Caco-2 (cell line): ENCODE measurements at regions of chr12 and their contacts with region 1.

Region 1: DNA sequence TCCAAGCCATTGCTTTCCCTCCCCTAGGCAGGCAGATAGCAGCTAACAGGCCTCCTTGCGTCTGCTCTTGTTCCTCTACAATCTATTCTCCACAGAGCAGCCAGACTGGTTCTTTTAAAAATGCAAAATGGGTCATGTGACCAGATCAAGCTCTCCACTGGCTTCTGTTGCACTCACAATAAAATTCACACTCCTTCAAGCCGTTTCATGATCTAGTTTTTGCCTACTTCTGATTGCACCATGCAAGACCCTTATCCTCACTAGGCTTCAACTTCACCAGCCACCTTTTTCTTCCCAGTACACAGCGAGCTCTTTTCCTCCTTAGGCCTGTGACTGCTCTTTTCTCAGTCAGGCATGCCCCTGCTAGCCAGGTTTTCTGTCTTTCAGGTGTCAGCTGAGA is 6.1 kb upstream of the KRAS start:
- DNase-seq: no peak
- H3K4me3 ChIP-seq: no peak overlapping the region
- H3K4me3 Mint-ChIP-seq: peak overlapping the region; percentile 43
- H3K27ac Mint-ChIP-seq: peak overlapping the region; percentile 79
- H3K4me1 ChIP-seq: peaks cover 61% of the 10 kb centered on the region
- H3K4me1 Mint-ChIP-seq: peaks cover 69% of the 10 kb centered on the region
- H3K27me3 ChIP-seq: no peaks in the 10 kb centered on the region
- H3K27me3 Mint-ChIP-seq: no peaks in the 10 kb centered on the region
- CTCF ChIP-seq: no peak

Region 2: GRCh38 chr12:25186788-25187397 is 69.9 kb before region 1 on chr12:
- CTCF ChIA-PET with region 1: no interaction called
- POLR2A ChIA-PET with region 1: no interaction called
- intact Hi-C with region 1: no loop called
- DNase-seq: no peak
- H3K4me3 ChIP-seq: no peak overlapping the region
- H3K4me3 Mint-ChIP-seq: no peak overlapping the region
- H3K27ac Mint-ChIP-seq: no peak overlapping the region
- H3K4me1 ChIP-seq: no peaks in the 10 kb centered on the region
- H3K4me1 Mint-ChIP-seq: no peaks in the 10 kb centered on the region
- H3K27me3 ChIP-seq: no peaks in the 10 kb centered on the region; the same call in 1 of the 2 replicates
- H3K27me3 Mint-ChIP-seq: peaks cover 2% of the 10 kb centered on the region
- CTCF ChIP-seq: no peak

Region 3: DNA sequence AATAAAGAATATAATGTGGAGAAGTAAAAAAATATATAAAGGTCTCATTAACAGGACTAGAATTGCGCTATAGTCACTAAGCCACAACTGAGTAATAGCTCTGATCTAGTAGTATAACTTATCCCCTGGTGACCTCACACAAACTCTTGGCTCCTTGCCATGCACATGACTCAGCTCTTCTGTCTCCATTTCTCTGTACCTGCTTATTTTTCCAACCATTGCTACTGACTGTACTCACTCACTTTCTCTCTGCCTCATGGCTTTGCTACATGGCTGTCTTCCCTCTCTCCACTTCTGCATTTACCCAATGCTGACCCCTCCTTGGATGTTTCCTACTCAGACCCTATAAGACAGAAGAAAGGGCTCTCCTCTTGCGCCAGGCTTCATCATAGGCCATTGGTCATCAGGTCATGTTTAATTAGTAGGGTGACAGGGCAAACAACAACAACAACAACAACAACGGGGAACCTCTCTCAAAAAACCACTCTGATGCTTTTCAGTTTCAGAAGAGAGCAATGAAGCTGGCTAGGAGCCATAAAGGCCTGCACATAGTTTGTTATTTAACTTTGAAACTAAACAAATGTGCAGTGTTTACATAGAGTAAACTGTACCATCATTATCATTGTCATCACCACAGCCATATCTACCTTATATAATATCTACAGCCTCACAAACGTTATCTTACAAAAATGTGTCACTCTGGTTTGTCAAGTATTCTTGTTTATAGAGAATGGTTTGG is 19.5 kb after region 1 on chr12:
- CTCF ChIA-PET with region 1: no interaction called
- POLR2A ChIA-PET with region 1: interaction called, 3 read pairs
- intact Hi-C with region 1: loop called (anchors 2 kb)
- DNase-seq: peak in 1 of 2 experiments; percentile 34
- H3K4me3 ChIP-seq: no peak overlapping the region
- H3K4me3 Mint-ChIP-seq: no peak overlapping the region
- H3K27ac Mint-ChIP-seq: peak overlapping the region; percentile 15
- H3K4me1 ChIP-seq: peaks cover 16% of the 10 kb centered on the region
- H3K4me1 Mint-ChIP-seq: peaks cover 19% of the 10 kb centered on the region
- H3K27me3 ChIP-seq: no peaks in the 10 kb centered on the region
- H3K27me3 Mint-ChIP-seq: no peaks in the 10 kb centered on the region
- CTCF ChIP-seq: no peak